Ascending aorta (tissue), 2 donors: ENCODE measurements at regions of chr4 and their contacts with region 1.

Region 1: GRCh38 chr4:82462415-82462831 is 32.0 kb downstream of the ENOPH1 start:
- DNase-seq: peak; percentile 79 to 96
- H3K4me3 ChIP-seq: no peak overlapping the region
- H3K27ac ChIP-seq: peak overlapping the region in 1 of 2 donors; percentile 8
- H3K4me1 ChIP-seq: no peaks in the 10 kb centered on the region
- H3K27me3 ChIP-seq: no peaks in the 10 kb centered on the region
- CTCF ChIP-seq: peak; percentile 48 to 92 (median 86)

Region 2: GRCh38 chr4:82611982-82612381 is 149.6 kb after region 1 on chr4:
- intact Hi-C with region 1: no loop called
- DNase-seq: no peak
- H3K4me3 ChIP-seq: no peak overlapping the region
- H3K27ac ChIP-seq: no peak overlapping the region
- H3K4me1 ChIP-seq: no peaks in the 10 kb centered on the region
- H3K27me3 ChIP-seq: no peaks in the 10 kb centered on the region
- CTCF ChIP-seq: no peak

Region 3: GRCh38 chr4:82798168-82799005 is 336.0 kb after region 1 on chr4 and contains the start of gene SCD5:
- intact Hi-C with region 1: loop called (anchors 10 kb)
- DNase-seq: peak in 1 of 2 donors; percentile 78
- H3K4me3 ChIP-seq: peak within 1 kb of the TSS; percentile 69 to 77
- H3K27ac ChIP-seq: peak within 1 kb of the TSS in 1 of 2 donors; percentile 10
- H3K4me1 ChIP-seq: peaks cover 0 to 10% of the 10 kb centered on the region in 2 donors
- H3K27me3 ChIP-seq: no peaks in the 10 kb centered on the region
- CTCF ChIP-seq: no peak
- total RNA-seq, gene SCD5: 28.0 TPM

Region 4: GRCh38 chr4:82900331-82901128 is 438.1 kb after region 1 on chr4 and contains the start of gene THAP9:
- intact Hi-C with region 1: loop called (anchors 5 kb)
- DNase-seq: peak; percentile 97 to 99
- H3K4me3 ChIP-seq: peak within 1 kb of the TSS; percentile 69 to 78
- H3K27ac ChIP-seq: peak within 1 kb of the TSS; percentile 98
- H3K4me1 ChIP-seq: peaks cover 0 to 20% of the 10 kb centered on the region in 2 donors
- H3K27me3 ChIP-seq: no peaks in the 10 kb centered on the region
- CTCF ChIP-seq: no peak
- total RNA-seq, gene THAP9: 0.32 TPM

Region 5: GRCh38 chr4:83012687-83013419 is 550.4 kb after region 1 on chr4:
- intact Hi-C with region 1: loop called (anchors 1 kb)
- DNase-seq: peak; percentile 75 to 97
- H3K4me3 ChIP-seq: peak overlapping the region; percentile 78 to 88
- H3K27ac ChIP-seq: peak overlapping the region; percentile 71 to 89
- H3K4me1 ChIP-seq: peaks cover 0 to 19% of the 10 kb centered on the region in 2 donors
- H3K27me3 ChIP-seq: no peaks in the 10 kb centered on the region
- CTCF ChIP-seq: peak; percentile 60 to 70 (median 63)

Region 6: GRCh38 chr4:83255584-83255983 is 793.2 kb after region 1 on chr4:
- intact Hi-C with region 1: loop called (anchors 1 kb)
- DNase-seq: no peak
- H3K4me3 ChIP-seq: no peak overlapping the region
- H3K27ac ChIP-seq: no peak overlapping the region
- H3K4me1 ChIP-seq: peaks cover 0 to 7% of the 10 kb centered on the region in 2 donors
- H3K27me3 ChIP-seq: no peaks in the 10 kb centered on the region
- CTCF ChIP-seq: no peak

Region 7: DNA sequence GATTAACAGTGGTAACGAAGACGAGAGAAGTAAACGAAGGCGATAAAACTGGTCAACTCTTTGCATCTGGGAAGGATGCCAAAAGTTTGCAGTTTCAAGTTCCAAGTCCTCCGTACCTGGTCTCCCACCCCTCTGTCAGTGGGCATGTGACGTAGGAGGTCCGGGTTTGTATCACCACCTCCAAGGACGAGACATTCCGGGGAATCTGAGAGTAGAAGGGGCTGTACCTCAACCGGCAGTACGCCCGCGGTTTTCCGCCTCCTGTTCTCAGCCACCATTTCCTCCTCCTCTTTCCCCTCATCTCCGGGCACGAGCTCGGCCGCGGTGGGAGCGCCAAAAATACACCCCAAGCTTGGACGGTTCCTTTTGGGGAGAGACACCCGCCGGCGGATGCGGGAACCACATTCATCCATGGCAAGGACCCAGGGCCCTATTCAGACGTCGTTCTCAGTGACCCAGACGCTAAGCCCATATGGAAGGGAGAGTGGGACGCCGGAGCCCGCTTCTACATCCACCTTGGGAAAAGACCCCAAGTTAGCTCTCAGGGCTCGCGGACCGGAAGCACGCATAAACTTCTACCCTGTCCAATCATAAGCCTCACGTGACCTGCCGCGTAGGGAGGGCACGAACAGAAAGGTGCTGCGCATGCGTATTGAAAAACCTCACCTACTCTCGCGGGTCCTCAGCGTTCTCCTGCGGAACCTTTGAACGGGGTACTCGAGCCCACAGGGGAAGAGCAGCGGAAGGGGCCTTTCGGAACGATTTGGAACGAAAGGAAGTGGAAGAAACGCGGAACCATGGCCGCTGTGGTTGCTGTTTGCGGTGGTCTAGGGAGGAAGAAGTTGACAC is 993.1 kb after region 1 on chr4 and contains the starts of genes HELQ and MRPS18C:
- intact Hi-C with region 1: loop called (anchors 10 kb)
- DNase-seq: peak; percentile 94 to 99
- H3K4me3 ChIP-seq: peak within 1 kb of the TSS; percentile 85 to 89
- H3K27ac ChIP-seq: peak within 1 kb of the TSS; percentile 98 to 99
- H3K4me1 ChIP-seq: peaks cover 0 to 14% of the 10 kb centered on the region in 2 donors
- H3K27me3 ChIP-seq: no peaks in the 10 kb centered on the region
- CTCF ChIP-seq: peak in 2 of 3 experiments; percentile 26 to 42
- total RNA-seq, gene HELQ: 1.1 TPM
- total RNA-seq, gene MRPS18C: 13.0 TPM

Region 8: GRCh38 chr4:83639849-83640493 is 1177.5 kb after region 1 on chr4:
- intact Hi-C with region 1: loop called (anchors 10 kb)
- DNase-seq: peak in 1 of 2 donors; percentile 80
- H3K4me3 ChIP-seq: no peak overlapping the region
- H3K27ac ChIP-seq: no peak overlapping the region
- H3K4me1 ChIP-seq: peaks cover 0 to 3% of the 10 kb centered on the region in 2 donors
- H3K27me3 ChIP-seq: no peaks in the 10 kb centered on the region
- CTCF ChIP-seq: peak; percentile 44 to 76 (median 75)